ENCODE measurements at regions of chr7 and their contacts with region 1.

Region 1: GRCh38 chr7:104923010-104923421 is 91.0 kb upstream of the KMT2E start:
- DNase-seq: peak; percentile 87
- H3K4me3 ChIP-seq: no peak overlapping the region
- H3K27ac ChIP-seq: peak overlapping the region in 3 of 4 donors; percentile 27 to 44 (median 41)
- H3K4me1 ChIP-seq: peaks cover 0 to 12% (median 5%) of the 10 kb centered on the region in 4 donors
- H3K27me3 ChIP-seq: no peaks in the 10 kb centered on the region
- CTCF ChIP-seq: peak; percentile 45 to 59 (median 48)
- EP300 ChIP-seq: no peak
- POLR2A ChIP-seq: no peak

Region 2: GRCh38 chr7:104231054-104232046 is 691.7 kb before region 1 on chr7:
- intact Hi-C with region 1: loop called (anchors 5 kb)
- DNase-seq: peak; percentile 66
- H3K4me3 ChIP-seq: no peak overlapping the region
- H3K27ac ChIP-seq: no peak overlapping the region
- H3K4me1 ChIP-seq: no peaks in the 10 kb centered on the region
- H3K27me3 ChIP-seq: no peaks in the 10 kb centered on the region
- CTCF ChIP-seq: peak in 3 of 4 experiments; percentile 55 to 75 (median 64)
- EP300 ChIP-seq: no peak
- POLR2A ChIP-seq: no peak

Region 3: GRCh38 chr7:104883718-104884452 is 39.1 kb before region 1 on chr7:
- intact Hi-C with region 1: loop called (anchors 1 kb)
- DNase-seq: peak; percentile 92
- H3K4me3 ChIP-seq: peak overlapping the region in 2 of 4 donors; percentile 7 to 16
- H3K27ac ChIP-seq: peak overlapping the region; percentile 26 to 55 (median 32)
- H3K4me1 ChIP-seq: peaks cover 0 to 20% (median 14%) of the 10 kb centered on the region in 4 donors
- H3K27me3 ChIP-seq: no peaks in the 10 kb centered on the region
- CTCF ChIP-seq: peak; percentile 55 to 86 (median 80)
- EP300 ChIP-seq: no peak
- POLR2A ChIP-seq: no peak

Region 4: DNA sequence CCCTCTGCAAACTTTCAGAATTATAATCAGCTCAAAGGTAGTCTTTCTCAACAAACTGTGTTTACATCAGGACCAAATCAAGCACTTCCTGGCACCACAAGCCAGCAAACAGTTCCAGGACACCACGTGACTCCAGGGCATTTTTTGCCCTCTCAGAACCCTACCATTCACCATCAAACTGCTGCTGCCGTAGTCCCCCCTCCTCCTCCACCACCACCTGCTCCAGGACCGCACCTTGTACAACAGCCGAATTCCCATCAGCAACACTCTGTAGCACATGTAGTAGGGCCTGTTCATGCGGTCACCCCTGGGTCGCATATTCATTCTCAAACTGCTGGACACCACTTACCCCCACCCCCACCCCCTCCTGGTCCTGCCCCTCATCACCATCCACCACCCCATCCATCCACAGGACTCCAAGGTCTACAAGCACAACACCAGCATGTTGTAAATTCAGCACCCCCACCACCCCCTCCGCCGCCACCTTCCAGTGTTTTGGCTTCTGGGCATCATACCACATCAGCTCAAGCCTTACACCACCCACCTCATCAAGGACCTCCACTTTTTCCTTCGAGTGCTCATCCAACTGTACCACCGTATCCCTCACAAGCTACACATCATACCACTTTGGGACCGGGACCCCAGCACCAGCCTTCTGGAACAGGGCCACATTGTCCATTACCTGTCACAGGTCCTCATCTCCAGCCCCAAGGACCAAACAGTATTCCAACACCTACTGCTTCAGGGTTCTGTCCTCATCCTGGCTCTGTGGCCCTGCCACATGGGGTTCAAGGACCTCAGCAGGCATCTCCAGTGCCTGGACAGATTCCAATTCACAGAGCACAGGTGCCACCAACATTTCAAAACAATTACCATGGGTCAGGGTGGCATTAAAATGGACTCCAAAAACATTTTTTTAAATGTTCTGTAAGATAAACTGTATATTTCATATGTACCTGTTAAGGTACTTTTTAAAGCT is 189.7 kb after region 1 on chr7:
- intact Hi-C with region 1: no loop called
- DNase-seq: no peak
- H3K4me3 ChIP-seq: no peak overlapping the region
- H3K27ac ChIP-seq: peak overlapping the region in 3 of 4 donors; percentile 10 to 53 (median 35)
- H3K4me1 ChIP-seq: peaks cover 0 to 14% (median 11%) of the 10 kb centered on the region in 4 donors
- H3K27me3 ChIP-seq: no peaks in the 10 kb centered on the region
- CTCF ChIP-seq: no peak
- EP300 ChIP-seq: no peak
- POLR2A ChIP-seq: no peak